Activated T-helper 2 cell treated with anti-CD3 and anti-CD28 coated beads, Interferon-gamma antibody, Interleukin-2, Interleukin-4, amounts not matched to agents 10 μg/mL and 5 μg/mL and 100 μg/mL, durations not matched to agents 14 hours and 24 hours and 36 hours (primary cell): ENCODE measurements at regions of chr1 and their contacts with region 1.

Region 1: DNA sequence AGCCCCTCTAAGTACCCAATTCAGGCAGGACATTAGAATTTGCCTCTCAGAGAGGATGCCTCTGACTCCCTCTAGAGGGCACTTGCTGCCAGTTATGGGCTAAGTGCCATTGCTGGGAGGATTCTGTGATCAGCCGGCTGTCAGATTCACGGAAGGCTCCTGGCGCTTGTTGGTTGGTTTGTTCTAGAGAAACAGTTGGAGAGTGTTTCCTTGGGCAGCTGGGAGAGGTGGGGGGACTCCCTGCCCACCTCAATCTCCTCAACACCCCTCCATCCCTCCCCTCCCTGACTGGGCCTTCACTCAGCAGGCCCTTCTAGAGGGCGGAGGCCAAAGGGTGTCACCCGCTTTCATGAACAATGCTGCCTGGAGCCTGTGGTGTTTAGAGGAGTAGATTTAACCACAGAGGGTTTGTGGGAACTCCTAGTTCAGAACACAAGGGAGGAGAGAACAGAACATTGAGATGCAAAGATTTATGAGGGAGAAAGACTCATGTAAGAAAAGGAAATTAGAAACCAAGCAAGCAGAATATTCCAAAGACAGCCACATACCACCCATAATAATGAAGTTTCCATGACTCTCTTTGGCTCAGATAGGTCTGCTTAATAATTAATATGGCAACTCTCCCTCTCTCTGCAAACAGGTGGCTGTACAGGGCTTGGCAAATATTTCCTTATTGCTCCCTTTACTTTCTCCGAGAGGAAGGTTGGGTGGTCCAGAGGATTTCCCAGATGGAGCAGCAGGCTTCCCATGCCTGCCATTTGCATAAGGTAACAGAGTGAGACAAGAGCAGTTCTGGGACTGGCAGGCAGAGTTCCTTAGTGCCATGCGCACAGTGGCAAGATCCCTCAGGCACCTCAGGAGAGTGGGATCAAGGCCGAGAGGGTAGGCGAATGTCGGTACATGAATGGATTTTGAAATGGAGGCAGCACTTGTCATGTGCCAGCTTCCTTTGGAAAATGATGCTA is 30.0 kb upstream of the ACP6 start:
- DNase-seq: peak; percentile 46
- H3K4me3 Mint-ChIP-seq: no peak overlapping the region
- H3K27ac Mint-ChIP-seq: no peak overlapping the region
- H3K4me1 Mint-ChIP-seq: peaks cover 5% of the 10 kb centered on the region
- H3K27me3 Mint-ChIP-seq: peaks cover 34% of the 10 kb centered on the region

Region 2: DNA sequence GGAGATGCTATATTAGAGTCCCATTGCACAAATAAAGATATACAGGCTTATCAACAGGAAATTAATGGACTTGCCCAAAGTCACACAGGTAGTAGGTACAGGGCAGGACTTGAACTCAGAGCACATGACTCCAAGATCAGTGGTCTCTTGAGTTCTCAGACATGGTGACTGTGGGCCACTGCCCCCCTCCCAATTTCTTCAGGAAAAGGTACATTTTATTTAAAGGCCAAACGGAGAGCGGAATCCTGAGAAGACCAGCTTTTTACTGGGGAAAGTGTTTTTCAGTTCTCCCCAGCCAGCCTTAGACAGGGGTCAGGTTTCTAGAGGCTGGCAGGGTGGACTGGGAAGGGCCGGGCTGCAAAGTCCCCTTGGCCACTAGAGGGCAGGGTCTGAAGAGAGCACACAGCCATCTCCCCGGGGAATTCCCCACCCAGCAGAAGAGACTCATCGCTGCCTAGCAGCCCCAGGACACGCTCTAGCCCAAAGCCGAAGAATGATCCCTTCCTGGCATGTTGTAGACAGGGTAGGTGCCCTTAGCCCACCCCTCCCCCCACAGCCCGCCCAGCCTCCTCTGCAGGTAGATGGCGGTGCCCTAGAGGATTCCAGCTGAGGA is 59.7 kb before region 1 on chr1:
- intact Hi-C with region 1: loop called (anchors 2 kb)
- DNase-seq: peak; percentile 68
- H3K4me3 Mint-ChIP-seq: no peak overlapping the region
- H3K27ac Mint-ChIP-seq: peak overlapping the region; percentile 15
- H3K4me1 Mint-ChIP-seq: peaks cover 45% of the 10 kb centered on the region
- H3K27me3 Mint-ChIP-seq: no peaks in the 10 kb centered on the region